ENCODE measurements at regions of chr1 and their contacts with region 1.

Region 1: DNA sequence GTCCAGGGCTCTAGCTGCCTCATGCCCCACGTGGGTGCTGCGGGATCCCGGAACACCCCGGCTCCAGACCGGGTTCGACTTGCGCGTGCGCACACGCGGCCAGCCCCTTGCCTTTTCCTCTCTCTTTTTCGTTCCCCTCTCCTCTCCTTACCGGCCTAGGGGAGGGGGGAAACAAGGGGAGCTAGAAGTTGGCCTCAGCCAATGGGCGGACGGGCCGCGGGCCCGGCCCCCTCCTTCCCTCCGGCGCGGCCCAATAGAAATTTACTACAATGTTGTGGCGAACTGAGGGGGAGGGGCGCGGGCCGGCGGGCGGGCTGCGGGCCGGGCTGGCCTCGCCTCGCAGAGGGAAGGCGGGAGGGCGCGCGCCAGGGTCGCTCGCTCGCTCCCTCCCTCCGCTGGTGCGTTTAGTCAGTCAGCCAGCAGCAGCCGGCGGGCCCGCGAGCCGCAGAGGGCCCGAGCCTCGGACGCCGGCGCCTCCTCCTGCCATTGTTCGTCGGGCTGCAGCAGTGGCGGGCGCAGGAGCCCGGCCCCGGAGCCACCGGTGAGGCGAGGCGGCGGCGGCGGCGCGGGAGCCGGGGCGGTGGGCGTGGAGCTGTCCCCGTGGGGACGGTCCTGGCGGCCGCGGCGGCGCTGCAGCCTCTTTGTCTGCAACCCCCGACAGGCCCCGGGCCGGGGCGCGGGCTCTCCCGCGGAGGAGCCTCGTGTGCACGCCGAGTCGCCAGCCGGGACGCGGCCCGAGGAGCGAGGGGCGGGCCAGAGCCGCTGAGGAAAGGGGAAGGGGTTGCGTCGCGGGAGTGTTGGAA is at the start of gene EPB41:
- DNase-seq: peak; percentile 81 to 94 (median 87)
- ATAC-seq: peak; percentile 94
- H3K4me3 ChIP-seq: peak within 1 kb of the TSS; percentile 91
- H3K4me3 Mint-ChIP-seq: peak within 1 kb of the TSS; percentile 95 to 100 (median 99)
- H3K27ac ChIP-seq: peak within 1 kb of the TSS; percentile 73
- H3K27ac Mint-ChIP-seq: peak within 1 kb of the TSS; percentile 87 to 97 (median 96)
- H3K4me1 ChIP-seq: peaks cover 34 to 37% of the 10 kb centered on the region in 2 donors
- H3K4me1 Mint-ChIP-seq: peaks cover 32 to 51% (median 39%) of the 10 kb centered on the region in 7 donors
- H3K27me3 ChIP-seq: no peaks in the 10 kb centered on the region
- H3K27me3 Mint-ChIP-seq: no peaks in the 10 kb centered on the region
- total RNA-seq, gene EPB41: 150 to 325 (median 175) TPM

Region 2: GRCh38 chr1:27455139-27455811 is 1459.2 kb before region 1 on chr1:
- CTCF ChIA-PET with region 1: no interaction called
- POLR2A ChIA-PET with region 1: no interaction called
- intact Hi-C with region 1: loop called in 1 of 2 experiments (anchors 10 kb)
- DNase-seq: peak in 7 of 9 donors; percentile 18 to 44 (median 34)
- ATAC-seq: peak; percentile 75
- H3K4me3 ChIP-seq: peak overlapping the region; percentile 48
- H3K4me3 Mint-ChIP-seq: peak overlapping the region; percentile 58 to 80 (median 69)
- H3K27ac ChIP-seq: peak overlapping the region; percentile 65
- H3K27ac Mint-ChIP-seq: peak overlapping the region; percentile 42 to 92 (median 84)
- H3K4me1 ChIP-seq: peaks cover 18 to 36% of the 10 kb centered on the region in 2 donors
- H3K4me1 Mint-ChIP-seq: peaks cover 36 to 68% (median 63%) of the 10 kb centered on the region in 7 donors
- H3K27me3 ChIP-seq: no peaks in the 10 kb centered on the region
- H3K27me3 Mint-ChIP-seq: no peaks in the 10 kb centered on the region

Region 3: DNA sequence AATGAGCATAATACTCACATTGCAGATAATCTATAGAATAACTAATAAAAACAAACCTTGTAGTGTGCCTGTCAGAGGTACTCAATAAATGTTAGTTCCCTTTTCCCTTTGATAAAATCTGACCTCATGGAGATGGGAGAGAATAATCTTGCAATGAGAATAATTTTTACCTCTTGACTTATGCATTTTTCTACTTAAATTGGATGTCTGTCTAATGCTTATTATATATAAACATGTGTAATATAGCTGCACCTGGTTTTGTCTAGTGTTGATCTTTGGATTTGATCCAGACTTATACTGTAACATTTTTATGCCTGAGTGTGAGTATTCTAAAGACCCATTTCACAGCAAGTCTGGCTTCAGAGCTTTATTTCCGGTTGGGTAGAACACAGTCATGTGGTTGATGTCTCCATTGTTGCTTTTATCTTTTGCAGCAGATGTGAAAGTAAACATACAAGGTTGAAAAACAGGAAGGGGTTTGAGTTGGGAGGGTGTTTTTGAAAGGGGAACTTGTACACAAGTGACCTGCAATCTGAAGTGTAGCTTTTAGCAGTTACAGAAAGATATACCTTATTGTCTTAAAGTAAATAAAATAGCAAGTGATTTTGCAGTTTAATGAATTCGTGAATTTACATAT is 12.3 kb after region 1 on chr1:
- CTCF ChIA-PET with region 1: interaction called, 8 read pairs
- POLR2A ChIA-PET with region 1: interaction called, 49 read pairs
- intact Hi-C with region 1: loop called (anchors 1 kb)
- DNase-seq: peak in 7 of 9 donors; percentile 61 to 85 (median 80)
- ATAC-seq: peak; percentile 93
- H3K4me3 ChIP-seq: peak overlapping the region; percentile 24
- H3K4me3 Mint-ChIP-seq: peak overlapping the region; percentile 54 to 91 (median 76)
- H3K27ac ChIP-seq: peak overlapping the region; percentile 69
- H3K27ac Mint-ChIP-seq: peak overlapping the region; percentile 65 to 98 (median 91)
- H3K4me1 ChIP-seq: peaks cover 53 to 54% of the 10 kb centered on the region in 2 donors
- H3K4me1 Mint-ChIP-seq: peaks cover 46 to 85% (median 55%) of the 10 kb centered on the region in 7 donors
- H3K27me3 ChIP-seq: no peaks in the 10 kb centered on the region
- H3K27me3 Mint-ChIP-seq: no peaks in the 10 kb centered on the region

Region 4: GRCh38 chr1:28983509-28984310 is 69.3 kb after region 1 on chr1:
- CTCF ChIA-PET with region 1: interaction called, 3 read pairs
- POLR2A ChIA-PET with region 1: interaction called, 4 read pairs
- intact Hi-C with region 1: loop called in 1 of 2 experiments (anchors 1 kb)
- DNase-seq: peak in 2 of 9 donors; percentile 13 to 34
- ATAC-seq: peak; percentile 38
- H3K4me3 ChIP-seq: no peak overlapping the region
- H3K4me3 Mint-ChIP-seq: peak overlapping the region in 6 of 10 donors; percentile 16 to 45 (median 32)
- H3K27ac ChIP-seq: no peak overlapping the region
- H3K27ac Mint-ChIP-seq: peak overlapping the region in 3 of 9 donors; percentile 19 to 77 (median 57)
- H3K4me1 ChIP-seq: peaks cover 0 to 16% of the 10 kb centered on the region in 2 donors
- H3K4me1 Mint-ChIP-seq: peaks cover 28 to 83% (median 75%) of the 10 kb centered on the region in 7 donors
- H3K27me3 ChIP-seq: no peaks in the 10 kb centered on the region
- H3K27me3 Mint-ChIP-seq: no peaks in the 10 kb centered on the region

Region 5: DNA sequence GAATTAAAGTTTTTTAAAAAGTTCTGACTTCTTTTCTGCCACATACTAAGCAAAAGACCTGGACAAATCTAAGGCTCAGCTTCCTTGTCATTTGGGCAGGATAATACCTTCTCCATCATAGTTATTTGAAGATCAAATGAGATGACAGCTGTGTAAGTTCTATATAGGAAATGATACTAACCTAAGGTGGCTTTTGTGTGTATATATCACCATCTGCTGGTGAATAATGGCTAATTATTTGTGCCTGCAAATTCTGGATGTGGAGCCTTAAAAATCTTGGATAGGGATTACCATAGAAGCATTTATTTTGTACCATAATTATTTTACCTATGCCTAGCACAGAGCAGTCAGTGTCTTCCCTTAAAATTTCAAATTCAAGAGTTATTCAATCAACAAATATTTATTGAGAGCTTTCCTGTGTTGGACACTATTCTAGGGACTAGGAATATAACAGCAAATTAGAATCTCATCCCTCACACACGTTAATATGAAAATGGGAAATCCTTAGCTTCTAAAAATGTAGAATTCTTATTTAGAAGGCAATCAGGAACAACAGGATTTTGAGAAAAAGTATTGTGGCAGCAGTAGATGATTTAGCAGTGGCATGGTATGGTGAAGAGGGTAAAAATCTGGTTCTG is 119.5 kb after region 1 on chr1:
- CTCF ChIA-PET with region 1: interaction called, 3 read pairs
- POLR2A ChIA-PET with region 1: interaction called, 4 read pairs
- intact Hi-C with region 1: loop called (anchors 1 kb)
- DNase-seq: peak in 7 of 9 donors; percentile 9 to 44 (median 30)
- ATAC-seq: peak; percentile 75
- H3K4me3 ChIP-seq: no peak overlapping the region
- H3K4me3 Mint-ChIP-seq: no peak overlapping the region
- H3K27ac ChIP-seq: no peak overlapping the region
- H3K27ac Mint-ChIP-seq: peak overlapping the region in 3 of 9 donors; percentile 18 to 64 (median 48)
- H3K4me1 ChIP-seq: no peaks in the 10 kb centered on the region
- H3K4me1 Mint-ChIP-seq: peaks cover 0 to 3% (median 0%) of the 10 kb centered on the region in 7 donors
- H3K27me3 ChIP-seq: no peaks in the 10 kb centered on the region
- H3K27me3 Mint-ChIP-seq: no peaks in the 10 kb centered on the region

Measured in naive thymus-derived CD4-positive, alpha-beta T cell (primary cell).